Left cardiac atrium (tissue), 4 donors: ENCODE measurements at regions of chr2 and their contacts with region 1.

Region 1: GRCh38 chr2:221075203-221075602 is 496.9 kb downstream of the EPHA4 start:
- DNase-seq: no peak
- ATAC-seq: no peak

Region 2: DNA sequence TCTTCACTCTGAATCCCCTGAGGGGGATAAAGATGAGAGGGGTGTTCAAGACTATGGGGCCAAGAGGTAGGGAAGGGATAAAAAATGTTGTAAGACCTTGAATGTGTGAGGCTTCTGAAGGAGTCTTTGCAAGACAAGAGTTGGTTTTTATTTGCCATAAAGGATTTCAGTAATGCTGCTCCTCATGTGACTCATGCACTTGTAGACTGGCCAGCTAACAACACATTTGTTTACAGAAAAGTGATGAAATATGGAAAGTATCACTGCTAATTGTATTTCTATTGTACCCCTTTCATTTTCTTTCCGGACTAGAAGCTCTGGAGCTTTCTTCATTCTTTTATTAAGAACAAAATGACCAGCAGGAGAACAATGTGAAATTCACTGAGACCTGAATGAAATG is 285.2 kb before region 1 on chr2:
- intact Hi-C with region 1: no loop called
- DNase-seq: no peak
- ATAC-seq: no peak

Region 3: GRCh38 chr2:220935789-220936321 is 139.3 kb before region 1 on chr2:
- intact Hi-C with region 1: loop called in 1 of 2 experiments (anchors 10 kb)
- DNase-seq: no peak
- ATAC-seq: peak; percentile 61 to 75

Region 4: GRCh38 chr2:221104361-221104811 is 29.2 kb after region 1 on chr2:
- intact Hi-C with region 1: loop called in 1 of 2 experiments (anchors 1 kb)
- DNase-seq: peak; percentile 92
- ATAC-seq: peak; percentile 98 to 99

Region 5: GRCh38 chr2:221189431-221190067 is 114.3 kb after region 1 on chr2:
- intact Hi-C with region 1: no loop called
- DNase-seq: no peak
- ATAC-seq: no peak